CD14-positive monocyte (primary cell): ENCODE measurements at regions of chr5 and their contacts with region 1.

Region 1: GRCh38 chr5:157193699-157194424 is 13.2 kb downstream of the ITK start:
- DNase-seq: no peak
- H3K4me3 ChIP-seq: no peak overlapping the region
- H3K4me3 Mint-ChIP-seq: no peak overlapping the region
- H3K27ac ChIP-seq: no peak overlapping the region
- H3K27ac Mint-ChIP-seq: no peak overlapping the region
- H3K4me1 ChIP-seq: no peaks in the 10 kb centered on the region
- H3K4me1 Mint-ChIP-seq: peaks cover 6% of the 10 kb centered on the region
- H3K27me3 ChIP-seq: peaks cover 0 to 2% of the 10 kb centered on the region in 2 donors
- H3K27me3 Mint-ChIP-seq: peaks cover 2 to 7% (median 3%) of the 10 kb centered on the region in 3 donors
- CTCF ChIP-seq: no peak

Region 2: GRCh38 chr5:155833287-155833686 is 1360.6 kb before region 1 on chr5:
- intact Hi-C with region 1: loop called in 1 of 2 experiments (anchors 5 kb)
- DNase-seq: no peak
- H3K4me3 ChIP-seq: no peak overlapping the region
- H3K4me3 Mint-ChIP-seq: no peak overlapping the region
- H3K27ac ChIP-seq: no peak overlapping the region
- H3K27ac Mint-ChIP-seq: no peak overlapping the region
- H3K4me1 ChIP-seq: no peaks in the 10 kb centered on the region
- H3K4me1 Mint-ChIP-seq: no peaks in the 10 kb centered on the region
- H3K27me3 ChIP-seq: no peaks in the 10 kb centered on the region
- H3K27me3 Mint-ChIP-seq: peaks cover 0 to 1% (median 0%) of the 10 kb centered on the region in 3 donors
- CTCF ChIP-seq: no peak